Natural killer cell (primary cell): ENCODE measurements at regions of chr5 and their contacts with region 1.

Region 1: DNA sequence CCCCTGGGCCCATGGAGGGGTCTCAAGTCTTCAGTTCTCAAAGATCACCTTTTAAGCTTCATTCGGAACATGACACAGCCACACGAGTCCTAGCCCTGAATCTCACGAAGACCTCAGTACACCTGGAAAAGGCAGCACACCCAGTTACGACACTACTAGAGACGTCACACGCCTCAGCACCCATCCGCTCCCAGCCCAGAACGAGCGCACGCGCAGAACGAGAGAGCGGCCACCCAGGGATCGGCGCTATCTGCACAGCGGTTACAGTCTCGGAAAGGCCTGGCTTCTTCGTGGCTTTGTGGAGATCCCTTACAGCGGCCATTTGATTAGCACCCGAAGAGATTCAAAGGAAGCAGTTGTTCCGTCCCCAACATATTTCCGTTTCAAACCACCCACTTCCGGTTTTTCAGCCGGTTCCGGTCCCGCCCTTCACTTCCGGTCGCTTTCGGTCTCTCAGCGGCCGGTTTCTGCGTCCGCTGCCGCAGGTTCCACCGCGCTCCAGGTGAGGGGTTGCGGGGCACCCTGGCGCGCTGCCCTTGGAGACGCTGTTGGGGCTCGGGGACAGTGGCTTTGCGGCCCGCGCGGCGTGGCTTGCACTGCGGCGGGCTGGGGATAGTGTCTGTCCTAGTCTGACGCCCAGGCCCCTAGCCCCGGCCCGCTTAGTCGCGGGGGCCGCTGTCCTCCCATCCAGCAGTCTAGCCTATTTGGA is at the start of gene UBLCP1:
- DNase-seq: peak; percentile 67 to 92
- ATAC-seq: peak; percentile 78 to 87 (median 81)
- H3K4me3 ChIP-seq: peak within 1 kb of the TSS; percentile 69
- H3K4me3 Mint-ChIP-seq: peak within 1 kb of the TSS; percentile 98
- H3K27ac ChIP-seq: peak within 1 kb of the TSS; percentile 89
- H3K27ac Mint-ChIP-seq: peak within 1 kb of the TSS; percentile 97 to 99
- H3K4me1 ChIP-seq: peaks cover 9% of the 10 kb centered on the region
- H3K4me1 Mint-ChIP-seq: peaks cover 39 to 50% of the 10 kb centered on the region in 2 donors
- H3K27me3 ChIP-seq: no peaks in the 10 kb centered on the region
- H3K27me3 Mint-ChIP-seq: peaks cover 0 to 11% of the 10 kb centered on the region in 2 donors
- CTCF ChIP-seq: no peak
- total RNA-seq, gene UBLCP1: 30.0 to 37.9 (median 32.1) TPM

Region 2: GRCh38 chr5:159209438-159210305 is 53.3 kb before region 1 on chr5 and contains the start of gene RNF145:
- intact Hi-C with region 1: loop called (anchors 1 kb)
- DNase-seq: peak; percentile 88 to 98
- ATAC-seq: peak; percentile 76 to 91 (median 78)
- H3K4me3 ChIP-seq: peak within 1 kb of the TSS; percentile 81
- H3K4me3 Mint-ChIP-seq: peak within 1 kb of the TSS; percentile 99
- H3K27ac ChIP-seq: peak within 1 kb of the TSS; percentile 81
- H3K27ac Mint-ChIP-seq: peak within 1 kb of the TSS; percentile 95 to 98
- H3K4me1 ChIP-seq: peaks cover 9% of the 10 kb centered on the region
- H3K4me1 Mint-ChIP-seq: peaks cover 42 to 46% of the 10 kb centered on the region in 2 donors
- H3K27me3 ChIP-seq: no peaks in the 10 kb centered on the region
- H3K27me3 Mint-ChIP-seq: peaks cover 6 to 25% of the 10 kb centered on the region in 2 donors
- CTCF ChIP-seq: no peak
- total RNA-seq, gene RNF145: 29.8 to 40.4 (median 38.4) TPM

Region 3: GRCh38 chr5:159504857-159505304 is 241.9 kb after region 1 on chr5:
- intact Hi-C with region 1: no loop called
- DNase-seq: no peak
- ATAC-seq: no peak
- H3K4me3 ChIP-seq: no peak overlapping the region
- H3K4me3 Mint-ChIP-seq: no peak overlapping the region
- H3K27ac ChIP-seq: no peak overlapping the region
- H3K27ac Mint-ChIP-seq: no peak overlapping the region
- H3K4me1 ChIP-seq: no peaks in the 10 kb centered on the region
- H3K4me1 Mint-ChIP-seq: no peaks in the 10 kb centered on the region
- H3K27me3 ChIP-seq: no peaks in the 10 kb centered on the region
- H3K27me3 Mint-ChIP-seq: peaks cover 3 to 9% of the 10 kb centered on the region in 2 donors
- CTCF ChIP-seq: no peak

Region 4: DNA sequence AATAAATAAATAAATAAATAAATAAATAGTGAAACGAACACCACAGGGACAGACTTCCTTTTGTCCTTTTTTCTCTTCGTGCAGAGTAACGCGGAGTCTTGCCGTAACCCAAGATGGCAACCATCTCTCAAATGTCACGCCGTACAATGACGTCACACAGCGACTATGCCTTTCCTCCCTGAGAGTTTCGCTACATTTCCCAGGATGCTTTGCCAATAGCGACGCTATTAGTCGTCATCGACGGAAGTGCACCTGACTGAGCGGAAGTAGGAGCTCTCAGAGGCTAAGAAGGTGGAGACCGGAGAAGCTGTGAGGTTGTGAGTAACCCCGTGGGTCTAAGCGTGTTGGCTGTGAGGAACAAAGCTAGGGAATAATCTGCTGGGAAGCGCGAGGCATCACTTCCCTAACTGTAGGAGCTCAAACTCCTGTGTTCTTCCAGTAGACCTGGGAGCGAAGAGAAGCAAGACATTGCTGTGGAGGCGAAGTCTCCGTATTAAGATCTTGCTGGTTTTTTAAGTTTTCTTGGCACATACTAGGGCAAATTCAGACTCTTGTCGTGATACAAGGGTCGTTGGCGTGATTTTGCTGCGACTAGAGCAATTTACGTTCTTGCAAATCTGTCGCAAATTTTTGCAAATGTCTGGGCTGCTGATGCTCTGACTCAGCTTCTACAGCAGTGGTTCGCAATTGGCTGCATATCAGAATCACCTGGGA is 746.0 kb after region 1 on chr5 and contains the start of gene TTC1:
- intact Hi-C with region 1: loop called (anchors 2 kb)
- DNase-seq: peak; percentile 86 to 100
- ATAC-seq: peak; percentile 97 to 99 (median 98)
- H3K4me3 ChIP-seq: peak within 1 kb of the TSS; percentile 63
- H3K4me3 Mint-ChIP-seq: peak within 1 kb of the TSS; percentile 96
- H3K27ac ChIP-seq: peak within 1 kb of the TSS; percentile 74
- H3K27ac Mint-ChIP-seq: peak within 1 kb of the TSS; percentile 92 to 94
- H3K4me1 ChIP-seq: peaks cover 18% of the 10 kb centered on the region
- H3K4me1 Mint-ChIP-seq: peaks cover 28 to 30% of the 10 kb centered on the region in 2 donors
- H3K27me3 ChIP-seq: no peaks in the 10 kb centered on the region
- H3K27me3 Mint-ChIP-seq: peaks cover 3 to 5% of the 10 kb centered on the region in 2 donors
- CTCF ChIP-seq: no peak
- total RNA-seq, gene TTC1: 28.1 to 34.9 (median 33.6) TPM